ENCODE measurements at regions of chr12 and their contacts with region 1.

Region 1: DNA sequence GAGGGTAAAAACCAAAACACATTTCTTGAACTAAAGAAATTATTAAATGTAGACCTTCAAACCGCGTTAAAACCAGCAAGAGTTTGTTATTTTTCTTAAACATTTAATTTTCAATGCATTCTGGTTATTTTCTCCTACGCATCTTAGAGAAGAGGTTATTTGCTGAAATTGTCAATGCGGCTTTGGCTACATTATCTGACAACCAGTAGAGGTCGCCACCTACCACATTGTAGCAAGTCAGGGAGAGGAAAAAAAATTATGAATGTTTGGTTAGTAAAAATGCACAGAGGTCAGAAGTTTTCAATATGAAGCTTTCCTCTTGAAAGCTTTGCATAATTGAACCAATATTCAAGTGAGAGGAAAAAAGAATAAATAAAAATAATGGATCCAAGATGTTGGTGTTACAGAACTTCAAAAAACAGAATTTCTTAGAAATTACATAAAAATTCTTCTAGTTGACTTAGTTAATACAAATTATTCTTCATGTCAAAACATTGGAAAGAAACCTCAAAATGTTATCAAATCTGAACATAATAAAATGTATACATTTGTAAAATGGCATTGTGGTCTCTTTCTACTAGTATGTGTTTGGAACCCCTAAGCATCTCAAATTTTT is 159.4 kb upstream of the TMTC2 start:
- DNase-seq: no peak
- ATAC-seq: peak; percentile 80
- H3K4me3 ChIP-seq: no peak overlapping the region
- H3K27ac ChIP-seq: no peak overlapping the region
- H3K4me1 ChIP-seq: no peaks in the 10 kb centered on the region
- H3K27me3 ChIP-seq: no peaks in the 10 kb centered on the region
- CTCF ChIP-seq: peak; percentile 83 to 92 (median 84)
- EP300 ChIP-seq: no peak
- POLR2A ChIP-seq: no peak
- RAD21 ChIP-seq: peak; percentile 97

Region 2: DNA sequence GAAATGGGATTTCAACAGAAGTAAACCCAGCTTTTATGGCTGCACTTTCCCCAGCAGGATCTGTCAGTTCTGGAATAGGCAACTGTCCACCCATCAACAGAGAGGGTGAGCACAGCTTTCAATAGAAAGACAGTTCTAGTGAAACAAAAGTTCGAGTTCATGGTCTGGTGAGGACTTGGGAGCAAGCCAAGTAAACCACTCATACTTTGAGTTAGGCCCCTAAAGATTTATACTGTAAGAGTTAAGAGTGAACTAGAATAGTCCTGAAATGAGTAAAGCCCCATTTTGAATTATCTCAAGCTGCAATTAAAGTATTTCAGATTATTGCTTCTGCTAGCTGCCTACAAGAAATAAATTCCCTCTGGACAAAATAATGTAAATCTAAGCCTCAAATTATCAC is 86.4 kb before region 1 on chr12:
- CTCF ChIA-PET with region 1: no interaction called
- POLR2A ChIA-PET with region 1: no interaction called
- RAD21 ChIA-PET with region 1: no interaction called
- SMC1A ChIA-PET with region 1: no interaction called
- in situ Hi-C with region 1: no loop called
- intact Hi-C with region 1: no loop called
- DNase-seq: no peak
- ATAC-seq: peak; percentile 80
- H3K4me3 ChIP-seq: no peak overlapping the region
- H3K27ac ChIP-seq: no peak overlapping the region
- H3K4me1 ChIP-seq: no peaks in the 10 kb centered on the region
- H3K27me3 ChIP-seq: no peaks in the 10 kb centered on the region
- CTCF ChIP-seq: no peak
- EP300 ChIP-seq: no peak
- POLR2A ChIP-seq: no peak
- RAD21 ChIP-seq: no peak

Region 3: DNA sequence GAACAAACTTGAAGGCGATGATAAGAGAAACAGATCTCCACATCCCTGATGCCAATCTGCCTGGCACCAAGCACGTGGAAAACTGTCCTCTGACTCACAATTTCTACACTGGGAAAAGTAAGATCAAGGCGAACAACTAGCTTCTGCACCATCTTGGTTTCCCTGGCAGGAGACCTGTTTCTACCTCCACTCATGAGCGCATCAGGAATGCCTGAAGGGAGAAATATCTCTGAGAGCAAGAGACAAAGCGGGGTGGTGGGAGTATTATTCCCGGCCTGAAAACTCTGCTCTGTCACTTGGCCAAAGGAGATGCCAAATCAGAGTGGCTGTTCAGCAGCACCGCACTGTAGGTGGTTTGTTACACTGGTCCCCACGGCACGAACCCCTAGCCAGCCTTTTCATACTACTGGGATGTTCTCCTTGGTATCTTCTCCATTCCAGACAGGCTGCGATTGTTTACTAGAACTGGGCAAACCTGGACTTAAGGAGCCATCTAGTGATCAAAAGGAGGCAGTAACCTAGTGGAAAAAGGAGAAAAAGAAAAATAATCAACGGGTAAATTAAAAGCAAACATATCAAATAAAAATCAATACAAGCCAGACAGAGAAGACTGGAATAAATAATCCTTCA is 100.4 kb after region 1 on chr12:
- CTCF ChIA-PET with region 1: interaction called, 55 read pairs
- POLR2A ChIA-PET with region 1: interaction called, 6 read pairs
- RAD21 ChIA-PET with region 1: interaction called, 38 read pairs
- SMC1A ChIA-PET with region 1: interaction called, 78 read pairs
- in situ Hi-C with region 1: loop called (anchors 5 kb)
- intact Hi-C with region 1: loop called (anchors 1 kb)
- DNase-seq: no peak
- ATAC-seq: peak; percentile 81
- H3K4me3 ChIP-seq: no peak overlapping the region
- H3K27ac ChIP-seq: no peak overlapping the region
- H3K4me1 ChIP-seq: no peaks in the 10 kb centered on the region
- H3K27me3 ChIP-seq: no peaks in the 10 kb centered on the region
- CTCF ChIP-seq: peak; percentile 40 to 65 (median 43); a peak in 4 of 6 replicates
- EP300 ChIP-seq: no peak
- POLR2A ChIP-seq: no peak
- RAD21 ChIP-seq: peak; percentile 81

Region 4: DNA sequence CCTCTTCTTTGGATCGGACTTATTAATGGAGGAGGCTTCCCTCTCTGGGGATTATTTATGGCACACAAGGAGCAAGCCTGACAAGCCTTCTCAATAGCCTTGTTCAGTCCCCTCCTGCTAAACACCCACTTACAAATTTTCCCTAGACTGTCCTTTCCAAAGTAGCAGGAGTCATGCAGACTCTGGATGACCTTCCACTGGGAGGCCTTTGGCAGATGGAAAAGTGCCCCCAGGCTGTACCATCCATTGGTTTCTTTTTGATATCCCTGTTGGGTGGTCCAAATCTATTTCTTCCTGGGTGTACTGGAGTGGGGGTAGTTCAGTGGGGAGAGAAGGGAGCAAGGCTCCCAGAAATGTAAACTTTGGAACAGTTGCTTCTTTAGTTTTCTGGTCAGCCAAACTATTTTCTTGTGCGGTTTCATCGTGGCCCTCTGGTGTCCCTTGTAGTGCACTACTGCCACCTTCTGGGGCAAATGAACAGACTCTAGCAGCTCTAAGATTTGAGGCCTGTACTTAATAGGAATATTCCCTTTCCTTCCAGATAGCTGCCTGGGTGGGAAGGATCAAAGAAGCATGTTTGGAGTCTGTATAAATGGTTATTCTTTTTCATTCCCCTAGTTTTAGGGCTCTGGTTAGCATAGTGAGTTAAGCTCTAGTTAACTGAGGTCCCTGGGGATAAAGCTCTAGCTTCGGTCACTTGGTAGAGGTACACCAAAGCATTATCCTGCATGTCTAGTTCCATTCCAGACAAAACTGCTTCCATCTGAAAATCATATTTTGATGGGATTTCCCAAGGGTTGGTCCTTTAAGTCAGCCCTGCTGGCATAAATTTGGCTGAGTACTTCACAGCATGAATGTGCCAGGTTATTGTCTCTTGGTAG is 1975.9 kb after region 1 on chr12:
- CTCF ChIA-PET with region 1: interaction called, 4 read pairs
- POLR2A ChIA-PET with region 1: no interaction called
- RAD21 ChIA-PET with region 1: interaction called, 4 read pairs
- SMC1A ChIA-PET with region 1: no interaction called
- in situ Hi-C with region 1: loop called (anchors 25 kb)
- intact Hi-C with region 1: no loop called
- DNase-seq: no peak
- ATAC-seq: peak; percentile 96
- H3K4me3 ChIP-seq: no peak overlapping the region
- H3K27ac ChIP-seq: no peak overlapping the region
- H3K4me1 ChIP-seq: no peaks in the 10 kb centered on the region
- H3K27me3 ChIP-seq: no peaks in the 10 kb centered on the region; a peak in 1 of 4 replicates
- CTCF ChIP-seq: peak; percentile 64 to 74 (median 68)
- EP300 ChIP-seq: no peak
- POLR2A ChIP-seq: no peak
- RAD21 ChIP-seq: peak; percentile 84